Endothelial cell of umbilical vein (primary cell): ENCODE measurements at regions of chr3 and their contacts with region 1.

Region 1: DNA sequence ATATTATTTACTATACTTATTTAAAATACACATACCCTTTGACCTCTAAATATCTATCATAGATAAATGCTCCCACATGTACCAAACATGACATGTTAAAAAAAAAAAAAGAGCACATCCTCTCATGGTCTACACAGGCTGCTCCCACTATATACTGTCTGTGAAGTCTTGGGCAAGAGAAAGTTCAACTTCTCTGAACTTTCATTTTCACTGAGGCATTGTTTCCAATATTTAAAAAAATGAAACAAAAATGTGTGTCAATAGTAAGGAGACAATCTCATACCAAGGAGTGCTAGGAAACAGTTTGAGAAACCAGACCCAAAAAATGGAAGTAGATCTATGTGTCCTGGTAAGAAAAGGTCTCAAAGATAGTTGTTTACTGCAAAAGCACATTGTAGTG is 29.3 kb downstream of the SLC4A7 start:
- DNase-seq: peak; percentile 53
- H3K4me3 ChIP-seq: no peak overlapping the region
- H3K27ac ChIP-seq: no peak overlapping the region
- H3K4me1 ChIP-seq: no peaks in the 10 kb centered on the region
- H3K27me3 ChIP-seq: no peaks in the 10 kb centered on the region
- CTCF ChIP-seq: no peak
- POLR2A ChIP-seq: no peak

Region 2: DNA sequence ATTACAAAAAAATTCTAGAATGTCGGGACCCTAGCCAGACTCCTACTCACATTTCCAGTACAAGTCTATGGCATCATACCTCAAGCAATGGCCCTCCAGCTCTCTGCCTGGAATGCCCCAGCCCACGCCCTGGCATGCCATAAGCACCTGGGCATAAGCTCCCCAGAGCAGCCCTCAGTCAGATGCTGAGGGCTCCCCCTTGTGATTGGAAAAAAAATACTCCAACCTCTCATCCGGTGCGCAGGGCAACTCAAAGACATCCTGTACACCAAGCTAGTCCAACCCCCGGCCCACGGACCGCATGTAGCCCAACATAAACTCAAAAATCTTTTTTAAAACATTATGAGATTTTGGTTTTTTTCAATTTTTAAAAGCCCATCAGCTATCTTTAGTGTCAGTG is 201.1 kb before region 1 on chr3:
- CTCF ChIA-PET with region 1: no interaction called
- POLR2A ChIA-PET with region 1: no interaction called
- dilution Hi-C with region 1: no loop called
- intact Hi-C with region 1: no loop called
- DNase-seq: peak; percentile 46
- H3K4me3 ChIP-seq: no peak overlapping the region
- H3K27ac ChIP-seq: no peak overlapping the region
- H3K4me1 ChIP-seq: no peaks in the 10 kb centered on the region
- H3K27me3 ChIP-seq: no peaks in the 10 kb centered on the region
- CTCF ChIP-seq: peak; percentile 36 to 58
- POLR2A ChIP-seq: no peak

Region 3: GRCh38 chr3:27479806-27480543 is 25.1 kb after region 1 on chr3:
- CTCF ChIA-PET with region 1: no interaction called
- POLR2A ChIA-PET with region 1: no interaction called
- dilution Hi-C with region 1: no loop called
- intact Hi-C with region 1: no loop called
- DNase-seq: no peak
- H3K4me3 ChIP-seq: no peak overlapping the region
- H3K27ac ChIP-seq: no peak overlapping the region
- H3K4me1 ChIP-seq: peaks cover 37% of the 10 kb centered on the region
- H3K27me3 ChIP-seq: no peaks in the 10 kb centered on the region
- CTCF ChIP-seq: no peak
- POLR2A ChIP-seq: no peak

Region 4: DNA sequence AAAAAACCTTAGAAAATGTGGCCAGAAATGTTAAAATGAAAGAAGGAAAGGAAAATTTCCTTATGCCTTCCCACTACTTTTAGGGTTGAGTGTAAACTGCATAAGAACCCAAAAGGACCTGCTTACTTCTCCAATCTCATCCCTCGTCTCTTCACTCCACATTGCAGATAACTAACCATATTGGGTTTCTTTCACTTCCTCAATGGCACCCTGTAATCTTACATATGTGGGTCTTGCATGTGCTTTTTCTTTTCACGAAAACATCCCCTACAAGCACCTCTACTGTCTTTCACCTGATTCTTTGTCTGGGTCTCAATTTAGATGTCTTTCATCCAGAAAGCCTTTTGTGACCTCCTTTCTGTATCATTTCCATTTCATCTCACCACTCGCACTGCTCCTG is 244.2 kb after region 1 on chr3:
- CTCF ChIA-PET with region 1: no interaction called
- POLR2A ChIA-PET with region 1: no interaction called
- dilution Hi-C with region 1: no loop called
- intact Hi-C with region 1: no loop called
- DNase-seq: no peak
- H3K4me3 ChIP-seq: no peak overlapping the region
- H3K27ac ChIP-seq: no peak overlapping the region
- H3K4me1 ChIP-seq: peaks cover 3% of the 10 kb centered on the region
- H3K27me3 ChIP-seq: no peaks in the 10 kb centered on the region
- CTCF ChIP-seq: no peak
- POLR2A ChIP-seq: no peak

Region 5: DNA sequence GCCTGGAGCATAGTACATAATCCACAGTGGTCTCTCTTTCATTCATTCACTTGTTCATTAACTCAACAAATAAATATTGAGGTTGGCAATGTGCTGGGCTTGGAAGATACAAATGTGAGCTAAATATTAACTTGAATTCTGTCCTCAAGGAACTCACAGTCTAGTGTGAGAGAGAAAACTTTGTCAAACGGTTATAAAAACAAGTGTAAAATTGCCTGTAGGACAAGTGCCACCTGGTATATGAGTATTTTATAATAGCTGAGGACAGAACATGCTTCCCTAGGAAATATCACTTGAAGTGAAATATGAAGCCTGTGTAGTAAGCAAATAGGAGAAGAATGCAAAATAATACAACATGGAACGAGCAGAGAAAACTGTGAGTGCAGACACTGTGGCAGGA is 613.4 kb after region 1 on chr3:
- CTCF ChIA-PET with region 1: no interaction called
- POLR2A ChIA-PET with region 1: no interaction called
- dilution Hi-C with region 1: no loop called
- intact Hi-C with region 1: no loop called
- DNase-seq: no peak
- H3K4me3 ChIP-seq: no peak overlapping the region
- H3K27ac ChIP-seq: no peak overlapping the region
- H3K4me1 ChIP-seq: no peaks in the 10 kb centered on the region
- H3K27me3 ChIP-seq: no peaks in the 10 kb centered on the region
- CTCF ChIP-seq: no peak
- POLR2A ChIP-seq: no peak

Region 6: GRCh38 chr3:28348629-28349483 is 893.9 kb after region 1 on chr3 and contains the starts of genes AZI2 and ZCWPW2:
- CTCF ChIA-PET with region 1: no interaction called
- POLR2A ChIA-PET with region 1: no interaction called
- dilution Hi-C with region 1: no loop called
- intact Hi-C with region 1: loop called (anchors 10 kb)
- DNase-seq: peak; percentile 95
- H3K4me3 ChIP-seq: peak within 1 kb of the TSS; percentile 59 to 86 (median 69)
- H3K27ac ChIP-seq: peak within 1 kb of the TSS; percentile 98
- H3K4me1 ChIP-seq: peaks cover 16% of the 10 kb centered on the region
- H3K27me3 ChIP-seq: no peaks in the 10 kb centered on the region
- CTCF ChIP-seq: peak in 1 of 2 donors; percentile 21
- POLR2A ChIP-seq: no peak
- total RNA-seq, gene AZI2: 39.5 and 50.0 TPM in 2 replicates
- total RNA-seq, gene ZCWPW2: 0.40 TPM in 1 of 2 replicates, not detected in the other